Left cardiac atrium (tissue), 4 donors: ENCODE measurements at regions of chr15 and their contacts with region 1.

Region 1: DNA sequence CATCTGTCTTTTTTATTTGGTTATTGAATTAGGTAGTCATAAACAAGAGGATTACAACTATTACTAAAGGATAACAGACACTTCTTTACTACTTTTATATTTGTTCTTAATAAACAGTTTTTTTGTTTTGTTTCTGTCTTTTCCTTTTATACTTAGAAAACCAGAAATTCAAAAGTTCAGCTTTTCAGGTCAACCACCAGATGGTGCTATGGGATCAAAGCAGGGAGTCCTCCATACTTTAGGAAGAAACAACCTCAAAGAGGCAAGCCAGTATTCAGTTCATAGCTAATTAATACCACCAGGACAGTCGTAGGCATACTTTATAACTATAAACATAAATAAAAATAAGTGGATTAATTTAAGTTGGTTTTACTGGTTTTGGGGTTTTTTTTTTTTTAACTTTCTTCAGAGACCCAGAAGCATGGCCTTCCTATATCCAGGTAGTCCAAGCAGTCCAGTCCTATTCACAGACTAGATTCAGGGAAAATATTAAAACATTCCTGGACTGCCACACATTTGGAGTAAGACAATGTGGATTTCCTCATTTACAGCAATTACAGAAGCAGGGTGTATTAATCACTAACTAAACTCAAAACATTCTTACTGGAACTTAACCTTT is 16.0 kb upstream of the EID1 start:
- DNase-seq: no peak
- ATAC-seq: peak; percentile 73 to 79

Region 2: DNA sequence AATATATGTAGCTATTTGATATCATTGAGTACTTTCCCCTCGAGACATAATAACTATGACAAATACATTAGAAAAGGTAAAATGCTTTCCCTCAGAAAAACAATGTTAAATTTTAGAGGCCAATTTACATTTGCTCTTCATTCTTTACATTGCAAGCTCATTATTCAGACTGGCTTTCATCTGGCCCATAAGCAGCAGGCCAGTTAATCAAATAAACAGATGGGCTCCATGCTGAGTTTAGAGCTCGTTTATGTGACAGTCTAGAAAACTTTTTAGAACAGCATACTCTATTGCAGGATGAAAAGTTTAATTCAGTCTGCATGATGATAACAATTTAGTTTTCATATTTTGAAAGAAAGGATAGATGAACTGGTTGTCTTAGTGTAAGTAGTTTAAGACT is 380.1 kb before region 1 on chr15:
- intact Hi-C with region 1: no loop called
- DNase-seq: no peak
- ATAC-seq: no peak

Region 3: DNA sequence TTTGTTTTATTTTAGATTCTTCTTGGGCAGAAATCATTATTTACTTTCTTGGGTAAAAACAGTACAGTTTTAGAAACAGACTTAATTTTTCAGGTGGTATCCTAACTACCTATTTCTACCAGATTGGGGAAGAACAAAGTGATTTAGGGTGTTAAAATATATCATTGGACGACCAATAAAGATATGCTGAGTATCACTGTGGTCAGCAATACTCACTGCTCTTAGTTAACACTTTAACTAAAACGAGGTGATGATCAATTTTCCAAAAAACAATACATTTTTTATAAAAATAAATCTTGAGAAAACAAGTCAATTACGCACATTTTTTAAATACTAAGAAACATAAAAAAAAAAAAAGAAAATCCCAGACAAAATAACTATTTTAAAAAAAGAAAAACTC is 289.9 kb after region 1 on chr15:
- intact Hi-C with region 1: loop called in 1 of 2 experiments (anchors 2 kb)
- DNase-seq: no peak
- ATAC-seq: no peak

Region 4: GRCh38 chr15:49495993-49496747 is 634.2 kb after region 1 on chr15:
- intact Hi-C with region 1: no loop called
- DNase-seq: no peak
- ATAC-seq: no peak

Region 5: DNA sequence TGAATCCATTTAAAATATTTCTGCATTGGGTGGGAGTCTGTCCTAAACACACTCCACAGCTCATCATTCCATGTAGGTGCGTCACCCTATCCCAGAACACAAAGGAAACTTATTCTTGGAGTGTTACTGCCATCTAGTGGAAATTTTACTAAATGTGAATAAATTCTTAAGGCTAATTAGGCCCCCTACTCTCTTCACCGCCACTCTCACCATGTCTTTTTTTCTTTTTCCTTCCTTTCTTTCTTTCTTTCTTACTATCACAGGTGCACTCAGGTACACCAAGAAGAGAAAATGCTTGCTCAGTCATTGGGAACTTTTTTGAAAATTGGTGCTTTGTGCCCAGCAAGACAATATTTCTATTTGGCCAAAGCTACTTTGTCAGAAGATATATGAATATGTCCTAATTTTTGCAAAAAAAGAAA is 1283.5 kb after region 1 on chr15:
- intact Hi-C with region 1: loop called (anchors 5 kb)
- DNase-seq: no peak
- ATAC-seq: peak; percentile 90 to 93